SK-N-SH (cell line): ENCODE measurements at regions of chr20 and their contacts with region 1.

Region 1: GRCh38 chr20:33576432-33577125 is 85.5 kb upstream of the C20orf144 start:
- DNase-seq: peak; percentile 51
- H3K4me3 ChIP-seq: no peak overlapping the region
- H3K27ac ChIP-seq: peak overlapping the region in 1 of 2 experiments; percentile 98; a peak in 3 of 4 replicates
- H3K4me1 ChIP-seq: peaks cover 10 to 36% of the 10 kb centered on the region in 2 experiments; a peak in 3 of 4 replicates
- H3K27me3 ChIP-seq: no peaks in the 10 kb centered on the region
- CTCF ChIP-seq: no peak
- EP300 ChIP-seq: peak in 1 of 2 experiments; percentile 94; a peak in 2 of 4 replicates
- RAD21 ChIP-seq: peak; percentile 62

Region 2: GRCh38 chr20:33489495-33490022 is 87.0 kb before region 1 on chr20:
- CTCF ChIA-PET with region 1: interaction called, 3 read pairs
- POLR2A ChIA-PET with region 1: interaction called, 11 read pairs
- DNase-seq: peak; percentile 99
- H3K4me3 ChIP-seq: peak overlapping the region; percentile 46 to 75
- H3K27ac ChIP-seq: peak overlapping the region; percentile 55 to 85
- H3K4me1 ChIP-seq: peaks cover 0 to 3% of the 10 kb centered on the region in 2 experiments; a peak in 2 of 4 replicates
- H3K27me3 ChIP-seq: no peaks in the 10 kb centered on the region
- CTCF ChIP-seq: no peak
- EP300 ChIP-seq: no peak
- RAD21 ChIP-seq: no peak

Region 3: GRCh38 chr20:33561692-33562601 is 14.6 kb before region 1 on chr20:
- CTCF ChIA-PET with region 1: interaction called, 24 read pairs
- POLR2A ChIA-PET with region 1: interaction called, 27 read pairs
- DNase-seq: peak; percentile 83
- H3K4me3 ChIP-seq: peak overlapping the region; percentile 21 to 31; a peak in 3 of 4 replicates
- H3K27ac ChIP-seq: peak overlapping the region; percentile 47 to 97
- H3K4me1 ChIP-seq: peaks cover 4 to 10% of the 10 kb centered on the region in 2 experiments; a peak in 3 of 4 replicates
- H3K27me3 ChIP-seq: no peaks in the 10 kb centered on the region
- CTCF ChIP-seq: no peak
- EP300 ChIP-seq: peak; percentile 79 to 94
- RAD21 ChIP-seq: peak; percentile 42

Region 4: DNA sequence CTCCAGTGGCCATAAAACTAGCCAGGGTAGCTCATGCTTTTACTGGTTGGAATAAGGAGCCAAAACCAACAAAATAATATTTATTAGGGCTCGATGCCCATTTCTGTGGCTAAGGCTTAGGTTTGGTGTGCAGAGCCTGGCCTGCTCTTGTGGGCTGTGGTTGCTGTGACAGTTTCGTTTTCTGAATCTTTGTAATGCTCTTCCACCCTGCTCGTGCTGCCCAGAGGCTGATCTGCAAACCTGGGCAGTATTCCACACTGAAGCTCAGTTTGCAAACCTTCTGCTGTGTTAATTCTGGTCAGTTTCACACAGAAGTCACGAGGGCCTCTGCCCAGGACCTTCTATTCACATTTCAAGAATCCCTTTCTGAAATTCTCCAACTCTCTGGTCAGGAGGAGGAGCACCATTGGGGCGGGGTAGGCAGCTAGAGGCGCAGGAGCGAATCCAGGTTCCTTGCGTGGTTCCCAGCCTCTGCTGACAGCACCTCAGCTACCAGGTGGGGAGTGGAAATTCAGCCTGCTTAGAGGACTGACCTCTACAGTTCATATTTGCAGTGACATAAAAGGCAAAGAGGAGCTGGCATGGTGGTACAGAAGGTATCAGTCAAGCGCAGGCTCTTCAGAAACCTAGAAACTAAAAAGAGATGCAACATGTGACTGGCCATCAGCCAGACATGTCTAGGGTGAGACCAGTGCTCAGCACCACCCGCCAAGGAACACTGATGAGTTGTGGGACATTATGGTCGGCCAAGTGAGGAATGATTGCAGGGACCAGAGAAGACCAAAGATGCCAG is 71.2 kb after region 1 on chr20:
- CTCF ChIA-PET with region 1: interaction called, 16 read pairs
- POLR2A ChIA-PET with region 1: interaction called, 5 read pairs
- DNase-seq: no peak
- H3K4me3 ChIP-seq: no peak overlapping the region
- H3K27ac ChIP-seq: peak overlapping the region in 1 of 2 experiments; percentile 93; a peak in 2 of 4 replicates
- H3K4me1 ChIP-seq: peaks cover 13 to 51% of the 10 kb centered on the region in 2 experiments; a peak in 3 of 4 replicates
- H3K27me3 ChIP-seq: no peaks in the 10 kb centered on the region
- CTCF ChIP-seq: no peak
- EP300 ChIP-seq: no peak
- RAD21 ChIP-seq: no peak

Region 5: DNA sequence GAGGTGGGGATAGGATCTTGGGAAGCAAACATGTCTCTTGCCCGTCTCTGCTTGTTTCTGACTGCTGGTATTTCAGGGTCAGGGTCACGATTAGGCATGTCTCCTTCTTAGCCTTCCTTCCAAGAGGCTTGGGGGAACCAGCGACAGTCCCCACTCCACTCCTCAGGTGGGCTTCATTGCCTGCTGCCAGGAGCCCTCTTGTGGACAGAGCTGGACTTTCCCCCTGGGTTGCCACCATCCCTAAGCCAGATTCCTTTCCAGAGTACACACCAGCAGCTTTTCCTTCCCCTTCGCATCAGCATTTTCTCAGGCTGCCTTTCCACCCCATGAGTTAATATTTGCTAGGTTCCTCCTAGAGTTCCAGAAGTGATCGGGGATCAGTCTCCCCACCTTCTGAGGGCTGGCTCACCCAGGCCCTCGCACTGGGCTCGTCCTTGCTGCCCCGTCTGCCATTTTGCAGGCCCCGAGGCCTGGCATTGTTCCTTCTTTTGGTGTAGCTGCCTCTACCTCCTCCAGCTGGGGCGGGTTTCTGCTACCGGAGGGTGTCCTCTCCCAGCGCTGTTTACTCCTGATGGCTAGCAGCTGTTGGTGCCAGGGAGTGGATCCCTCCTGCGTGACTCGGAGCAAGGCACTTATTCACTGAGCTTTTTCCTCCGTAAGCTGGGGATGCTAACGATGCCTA is 76.8 kb after region 1 on chr20:
- CTCF ChIA-PET with region 1: interaction called, 16 read pairs
- POLR2A ChIA-PET with region 1: interaction called, 5 read pairs
- DNase-seq: peak; percentile 88
- H3K4me3 ChIP-seq: peak overlapping the region in 1 of 2 experiments; percentile 23; a peak in 1 of 4 replicates
- H3K27ac ChIP-seq: peak overlapping the region in 1 of 2 experiments; percentile 17; a peak in 1 of 4 replicates
- H3K4me1 ChIP-seq: peaks cover 1 to 39% of the 10 kb centered on the region in 2 experiments; a peak in 2 of 4 replicates
- H3K27me3 ChIP-seq: no peaks in the 10 kb centered on the region
- CTCF ChIP-seq: peak; percentile 82
- EP300 ChIP-seq: no peak
- RAD21 ChIP-seq: peak; percentile 96

Region 6: GRCh38 chr20:33753763-33754162 is 177.2 kb after region 1 on chr20:
- CTCF ChIA-PET with region 1: no interaction called
- POLR2A ChIA-PET with region 1: no interaction called
- DNase-seq: no peak
- H3K4me3 ChIP-seq: no peak overlapping the region
- H3K27ac ChIP-seq: no peak overlapping the region
- H3K4me1 ChIP-seq: no peaks in the 10 kb centered on the region
- H3K27me3 ChIP-seq: no peaks in the 10 kb centered on the region
- CTCF ChIP-seq: no peak
- EP300 ChIP-seq: no peak
- RAD21 ChIP-seq: no peak